ENCODE measurements at regions of chr1 and their contacts with region 1.

Region 1: GRCh38 chr1:70142075-70142474 is 63.3 kb downstream of the LRRC40 start:
- DNase-seq: no peak

Region 2: DNA sequence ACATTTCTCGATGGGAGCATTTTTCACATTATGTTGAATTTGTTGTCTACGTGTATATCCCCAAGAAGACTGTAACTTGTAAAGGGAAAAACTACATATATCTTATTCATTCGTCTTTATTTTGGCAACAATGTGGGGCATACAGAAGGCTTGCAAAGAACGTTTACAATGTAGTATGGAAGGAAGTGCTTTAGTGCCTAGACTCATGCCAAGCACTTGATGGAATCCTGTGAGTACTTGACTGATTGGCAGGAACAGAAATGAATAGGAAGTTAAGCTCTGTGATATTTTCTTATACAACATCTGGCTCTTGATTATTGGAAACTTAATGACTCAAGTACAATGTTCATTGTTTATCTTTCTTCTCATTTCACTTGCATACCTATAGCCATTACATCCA is 289.9 kb before region 1 on chr1:
- intact Hi-C with region 1: no loop called
- DNase-seq: no peak

Region 3: DNA sequence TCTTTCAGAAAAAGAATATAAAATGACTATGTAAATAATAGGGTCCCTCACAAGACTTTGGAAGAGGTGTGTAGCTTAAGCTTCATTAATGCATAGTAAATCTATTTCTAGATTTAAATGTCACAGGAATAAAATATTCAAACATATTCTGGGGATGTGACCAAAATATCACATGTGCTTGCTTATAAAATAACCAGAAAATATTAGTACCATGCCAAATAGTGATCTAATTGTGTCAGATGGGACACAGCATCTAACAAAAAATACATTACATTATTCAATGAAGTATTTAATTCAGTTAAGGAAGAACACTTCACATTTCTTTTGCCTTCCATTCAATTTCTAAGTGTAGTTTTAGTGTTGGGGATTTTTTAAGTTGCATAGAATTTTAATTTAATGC is 116.2 kb before region 1 on chr1:
- intact Hi-C with region 1: no loop called
- DNase-seq: no peak

Region 4: GRCh38 chr1:70397014-70397413 is 254.9 kb after region 1 on chr1:
- intact Hi-C with region 1: no loop called
- DNase-seq: no peak

Region 5: DNA sequence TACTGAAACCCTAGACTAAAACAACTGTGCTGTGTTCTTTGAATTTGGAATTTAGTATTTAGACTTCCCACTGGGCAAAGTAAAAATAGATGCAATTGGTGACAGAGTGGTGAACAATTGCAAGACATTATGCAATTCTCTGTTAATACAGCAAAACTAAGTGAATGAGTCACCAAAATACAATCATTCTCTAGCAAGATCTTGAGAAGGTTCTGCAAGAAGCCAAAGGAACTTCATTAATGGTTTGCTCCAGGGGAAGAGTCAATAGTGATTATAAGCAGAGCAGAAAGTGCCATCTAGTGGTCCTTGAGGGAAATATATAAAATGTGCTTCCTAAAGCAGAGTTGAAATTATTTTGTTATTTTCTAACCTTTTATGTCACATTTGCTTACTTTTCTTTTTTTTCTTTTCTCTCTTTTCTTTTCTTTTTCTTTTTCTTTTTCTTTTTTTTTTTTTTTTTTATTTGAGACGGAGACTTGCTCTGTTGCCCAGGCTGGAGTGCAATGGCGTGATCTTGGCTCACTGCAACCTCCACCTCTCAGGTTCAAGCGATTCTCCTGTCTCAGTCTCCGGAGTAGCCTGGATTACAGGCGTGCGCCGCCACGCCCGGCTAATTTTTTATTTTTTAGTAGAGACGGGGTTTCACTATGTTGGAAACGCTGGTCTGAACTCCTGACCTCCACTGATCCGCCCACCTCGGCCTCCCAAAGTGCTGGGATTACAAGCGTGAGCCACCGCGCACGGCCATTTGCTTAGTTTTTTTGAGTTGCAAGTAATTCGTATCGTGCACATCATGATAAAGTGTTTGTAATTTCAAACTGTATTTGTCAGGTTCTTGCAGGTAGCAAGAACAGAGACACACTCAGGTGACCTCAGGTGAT is 368.2 kb after region 1 on chr1:
- intact Hi-C with region 1: loop called in 1 of 2 experiments (anchors 5 kb)
- DNase-seq: no peak